AG04449 (cell line): ENCODE measurements at regions of chr2 and their contacts with region 1.

Region 1: GRCh38 chr2:217713395-217714286 is 289.2 kb downstream of the TNS1 start:
- DNase-seq: no peak
- H3K4me3 ChIP-seq: no peak overlapping the region
- CTCF ChIP-seq: peak; percentile 95

Region 2: GRCh38 chr2:216666461-216667233 is 1047.0 kb before region 1 on chr2:
- CTCF ChIA-PET with region 1: interaction called, 12 read pairs
- POLR2A ChIA-PET with region 1: no interaction called
- DNase-seq: no peak
- H3K4me3 ChIP-seq: no peak overlapping the region
- CTCF ChIP-seq: peak; percentile 88

Region 3: DNA sequence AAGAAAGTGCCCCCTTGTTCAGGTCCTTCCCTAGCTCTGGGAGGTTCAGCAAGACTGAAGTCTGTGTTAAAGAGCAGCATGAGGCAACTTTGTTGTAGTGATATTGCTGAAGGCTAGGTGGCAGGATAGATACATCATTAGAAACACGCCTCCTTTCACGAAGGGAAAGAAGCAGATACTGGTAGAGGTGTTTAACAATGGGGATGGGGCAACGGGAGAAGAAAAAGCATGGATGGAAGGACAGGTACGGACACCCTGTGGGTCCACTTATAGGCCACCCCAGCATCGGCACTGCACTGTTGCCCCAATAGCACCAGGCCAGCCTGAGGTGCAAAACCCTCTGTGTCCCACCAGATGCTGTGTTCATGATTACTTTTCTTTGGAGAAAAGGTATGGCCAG is 1014.7 kb before region 1 on chr2:
- CTCF ChIA-PET with region 1: interaction called, 31 read pairs
- POLR2A ChIA-PET with region 1: interaction called, 3 read pairs
- DNase-seq: no peak
- H3K4me3 ChIP-seq: no peak overlapping the region
- CTCF ChIP-seq: peak; percentile 66

Region 4: GRCh38 chr2:217370391-217370790 is 343.2 kb before region 1 on chr2:
- CTCF ChIA-PET with region 1: interaction called, 12 read pairs
- POLR2A ChIA-PET with region 1: interaction called, 3 read pairs
- DNase-seq: no peak
- H3K4me3 ChIP-seq: no peak overlapping the region
- CTCF ChIP-seq: no peak

Region 5: GRCh38 chr2:217521820-217522219 is 191.8 kb before region 1 on chr2:
- CTCF ChIA-PET with region 1: interaction called, 102 read pairs
- POLR2A ChIA-PET with region 1: no interaction called
- DNase-seq: no peak
- H3K4me3 ChIP-seq: no peak overlapping the region
- CTCF ChIP-seq: no peak

Region 6: GRCh38 chr2:217703102-217703501 is 10.5 kb before region 1 on chr2:
- CTCF ChIA-PET with region 1: interaction called, 12 read pairs
- POLR2A ChIA-PET with region 1: no interaction called
- DNase-seq: no peak
- H3K4me3 ChIP-seq: no peak overlapping the region
- CTCF ChIP-seq: no peak

Region 7: DNA sequence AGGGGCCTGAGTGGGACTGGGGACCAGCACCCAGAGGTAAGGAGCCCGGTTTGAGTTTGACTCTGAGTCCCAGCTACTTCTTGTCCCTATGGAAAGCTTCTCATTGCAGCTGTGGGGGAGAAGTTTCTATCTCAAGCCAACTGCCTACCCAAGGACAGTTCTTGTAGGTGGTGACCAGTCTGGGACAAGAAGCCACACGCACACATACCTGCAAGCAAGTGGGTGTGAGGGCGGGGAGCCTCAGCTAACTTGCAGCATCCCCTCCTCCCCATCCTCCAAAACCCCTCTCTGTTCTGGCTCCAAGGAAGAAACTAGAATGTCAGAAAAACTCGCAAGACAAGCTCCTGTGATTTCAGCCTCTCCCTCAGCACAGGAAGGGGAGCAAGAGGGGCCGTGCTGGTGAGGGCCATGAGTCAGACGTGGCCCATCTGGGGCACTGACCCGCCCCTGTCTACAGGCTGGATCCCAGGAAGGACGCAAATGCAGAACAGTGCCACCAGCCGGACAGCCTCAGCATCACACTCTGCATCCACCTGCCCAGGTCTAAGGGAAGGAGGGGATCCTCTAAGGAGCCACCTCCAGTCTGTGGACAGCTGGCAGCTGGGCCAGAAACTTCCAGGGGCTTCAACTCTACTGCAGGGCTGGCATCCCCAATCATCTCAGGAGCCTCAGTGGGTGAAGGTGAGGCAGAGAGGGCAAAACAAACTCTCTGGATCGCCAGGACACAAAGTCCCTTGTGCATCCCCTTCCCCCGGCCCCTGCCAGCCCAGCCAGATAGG is 185.8 kb after region 1 on chr2:
- CTCF ChIA-PET with region 1: no interaction called
- POLR2A ChIA-PET with region 1: no interaction called
- DNase-seq: no peak
- H3K4me3 ChIP-seq: no peak overlapping the region
- CTCF ChIP-seq: peak; percentile 85

Region 8: DNA sequence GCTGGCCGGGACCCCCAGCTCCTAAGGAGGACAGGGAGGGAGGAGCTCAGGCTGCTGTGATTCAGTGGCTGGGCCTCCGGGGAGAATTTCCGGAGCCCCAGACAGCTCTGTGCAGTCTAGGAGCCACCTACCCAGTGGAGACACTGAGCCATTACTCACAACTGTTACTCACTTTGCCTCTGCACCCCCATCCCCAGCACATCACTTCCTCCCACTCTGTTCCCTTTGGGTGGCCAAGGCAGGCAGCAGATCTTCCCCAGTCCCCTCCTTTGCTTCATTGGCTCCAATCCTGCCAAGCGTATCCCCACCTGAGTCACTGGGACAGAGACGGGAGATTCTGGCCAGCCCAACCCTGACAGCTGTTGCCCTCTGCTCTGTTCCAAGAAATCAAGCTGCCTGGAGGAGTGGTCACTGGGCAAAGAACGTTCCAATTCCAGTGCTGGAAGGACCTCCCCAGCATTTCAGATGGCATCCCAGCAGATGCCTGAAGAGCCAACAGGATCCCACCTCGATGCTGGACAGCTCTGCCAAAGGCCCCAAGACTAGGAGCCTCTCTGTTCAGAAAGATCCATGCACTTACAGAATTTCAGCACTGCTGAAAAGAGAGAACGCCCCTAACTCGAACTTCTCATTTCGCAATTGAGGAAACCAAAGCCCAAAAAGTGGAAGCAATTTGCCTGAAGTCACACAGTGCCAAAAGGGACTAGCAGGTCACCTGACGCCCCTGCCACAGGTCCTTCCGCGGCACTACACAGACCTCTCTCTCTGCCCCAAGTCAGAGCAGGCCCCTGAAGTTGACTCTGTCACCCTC is 220.9 kb after region 1 on chr2:
- CTCF ChIA-PET with region 1: no interaction called
- POLR2A ChIA-PET with region 1: no interaction called
- DNase-seq: peak; percentile 89
- H3K4me3 ChIP-seq: peak overlapping the region; percentile 1
- CTCF ChIP-seq: no peak